Activated B cell treated with CpG ODN at 0.5 μM for 24 hours (primary cell): ENCODE measurements at regions of chr16 and their contacts with region 1.

Region 1: DNA sequence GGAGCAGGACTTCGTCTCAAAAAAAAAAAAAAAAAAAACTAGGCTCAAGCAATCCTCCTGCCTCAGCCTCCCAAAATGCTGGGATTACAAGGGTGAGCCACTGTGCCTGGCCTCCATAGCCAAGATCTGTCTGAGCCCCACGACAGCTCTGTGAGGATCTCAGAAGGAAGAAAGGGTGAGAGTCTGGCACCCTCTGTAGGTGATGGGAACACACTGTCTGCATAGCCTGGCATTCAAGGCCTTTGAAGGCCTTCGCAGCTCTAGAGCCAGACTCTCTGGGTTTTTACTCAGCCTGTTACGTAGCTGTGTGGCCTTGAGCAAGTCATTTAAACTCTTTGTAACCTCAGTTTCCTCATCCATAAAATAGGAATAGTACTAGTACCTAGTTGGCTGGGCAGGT is 6.3 kb upstream of the XPO6 start:
- DNase-seq: no peak
- ATAC-seq: peak; percentile 99
- H3K4me3 Mint-ChIP-seq: no peak overlapping the region
- H3K27ac Mint-ChIP-seq: no peak overlapping the region
- H3K4me1 Mint-ChIP-seq: peaks cover 2% of the 10 kb centered on the region
- H3K27me3 Mint-ChIP-seq: no peaks in the 10 kb centered on the region
- CTCF ChIP-seq: no peak

Region 2: DNA sequence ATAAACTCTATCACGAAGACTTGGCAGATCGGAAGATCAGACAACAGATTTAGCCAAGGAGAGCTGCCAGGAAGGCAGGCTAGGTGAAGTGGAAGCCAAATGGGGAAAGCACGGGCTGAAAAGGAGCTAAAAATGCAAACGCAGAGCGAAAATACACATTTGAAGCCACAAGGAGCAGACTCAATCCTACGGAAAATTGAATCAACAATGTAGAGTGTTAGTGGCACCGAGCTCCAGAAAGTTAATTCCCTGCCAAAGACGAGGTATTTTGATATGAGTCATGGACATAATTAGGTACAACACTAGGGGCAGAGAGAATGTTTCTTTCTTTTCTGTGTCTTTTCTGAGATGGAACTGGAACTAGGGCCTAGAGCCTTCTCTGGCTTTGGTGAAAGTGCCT is 175.3 kb before region 1 on chr16:
- CTCF ChIA-PET with region 1: no interaction called
- POLR2A ChIA-PET with region 1: interaction called, 14 read pairs
- intact Hi-C with region 1: no loop called
- DNase-seq: no peak
- ATAC-seq: no peak
- H3K4me3 Mint-ChIP-seq: no peak overlapping the region
- H3K27ac Mint-ChIP-seq: no peak overlapping the region
- H3K4me1 Mint-ChIP-seq: no peaks in the 10 kb centered on the region
- H3K27me3 Mint-ChIP-seq: peaks cover 6% of the 10 kb centered on the region
- CTCF ChIP-seq: no peak

Region 3: DNA sequence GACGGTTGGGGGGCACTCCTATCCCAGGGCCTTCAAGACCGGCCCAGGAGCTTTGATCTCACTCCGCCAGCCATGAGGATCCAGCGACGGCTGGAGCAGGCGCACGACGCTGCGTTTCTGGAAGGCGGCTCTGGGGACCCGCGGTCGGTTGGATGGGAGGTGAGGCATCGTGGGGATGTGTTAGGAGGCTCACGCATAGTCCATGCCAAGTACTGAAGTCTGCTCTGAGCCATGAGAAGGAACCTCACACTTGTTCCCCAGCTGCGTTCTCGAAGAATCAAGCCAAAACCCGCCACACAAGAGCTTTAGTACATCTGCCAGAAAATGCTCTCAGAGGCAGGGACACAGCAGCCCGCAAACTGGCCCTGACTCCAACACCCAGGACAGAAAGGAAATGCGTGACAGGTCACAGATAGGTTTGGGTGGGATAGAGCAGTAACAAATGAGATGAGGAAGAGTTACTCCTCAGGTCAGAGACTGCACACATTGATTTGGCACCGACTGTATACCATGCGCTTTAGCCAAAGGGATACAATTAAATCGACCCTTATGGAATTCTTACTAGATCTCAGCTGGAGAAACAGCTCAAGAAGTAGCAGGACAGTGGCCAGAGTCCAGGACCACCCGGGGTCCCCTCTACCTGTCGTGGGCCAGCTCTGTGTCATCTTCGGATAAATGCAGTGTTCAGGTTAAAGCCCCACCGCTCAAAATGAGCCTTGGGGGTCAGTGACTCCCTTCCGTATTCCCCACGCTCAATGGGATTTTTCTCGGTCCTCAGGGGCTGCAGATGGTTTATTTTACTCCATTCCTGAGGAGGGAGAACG is 147.9 kb before region 1 on chr16:
- CTCF ChIA-PET with region 1: interaction called, 8 read pairs
- POLR2A ChIA-PET with region 1: no interaction called
- intact Hi-C with region 1: loop called (anchors 1 kb)
- DNase-seq: no peak
- ATAC-seq: no peak
- H3K4me3 Mint-ChIP-seq: no peak overlapping the region
- H3K27ac Mint-ChIP-seq: no peak overlapping the region
- H3K4me1 Mint-ChIP-seq: no peaks in the 10 kb centered on the region
- H3K27me3 Mint-ChIP-seq: peaks cover 16% of the 10 kb centered on the region
- CTCF ChIP-seq: no peak